Left colon (tissue), 2 donors: ENCODE measurements at regions of chr2 and their contacts with region 1.

Region 1: GRCh38 chr2:147910990-147911473 is 66.2 kb downstream of the ACVR2A start:
- DNase-seq: no peak
- ATAC-seq: peak; percentile 52

Region 2: DNA sequence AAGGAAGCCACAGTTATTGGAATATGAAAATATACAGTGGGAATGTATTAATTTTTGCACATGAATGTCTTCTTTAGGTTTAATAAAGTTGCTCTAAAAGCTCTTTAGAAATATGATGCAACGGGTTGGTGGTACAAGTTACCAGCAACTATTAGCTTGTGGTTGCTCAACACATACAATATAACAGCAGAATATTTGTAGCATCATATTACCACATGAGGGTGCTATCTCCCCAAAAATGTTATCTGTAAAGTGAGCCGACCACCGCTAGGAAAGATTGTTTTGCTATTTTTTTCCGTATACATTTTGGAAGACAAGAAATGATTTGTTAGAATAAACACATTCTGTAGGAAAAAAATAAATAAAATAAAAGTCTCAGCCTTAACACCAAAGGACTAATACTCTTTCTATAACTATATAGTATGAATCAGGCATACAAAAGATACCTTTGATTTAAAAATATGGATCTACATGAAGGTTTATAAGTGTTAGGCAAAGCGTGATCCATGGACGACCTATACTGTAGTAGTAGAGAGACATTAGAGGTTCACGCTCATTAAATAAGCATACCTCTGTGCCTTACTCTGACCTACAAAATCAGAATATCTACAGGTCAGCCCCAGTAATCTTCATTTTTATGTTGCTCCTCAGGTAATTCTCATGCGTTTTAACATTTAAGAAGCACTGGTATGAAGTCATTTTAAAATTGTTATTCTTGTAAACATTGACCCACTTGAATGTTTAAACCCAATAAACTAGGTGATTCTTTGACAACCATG is 1176.8 kb before region 1 on chr2:
- intact Hi-C with region 1: loop called in 1 of 2 experiments (anchors 10 kb)
- DNase-seq: no peak
- ATAC-seq: peak; percentile 55

Region 3: GRCh38 chr2:146927080-146927711 is 983.8 kb before region 1 on chr2:
- intact Hi-C with region 1: loop called in 1 of 2 experiments (anchors 10 kb)
- DNase-seq: peak; percentile 29 to 46
- ATAC-seq: peak; percentile 85

Region 4: GRCh38 chr2:147082850-147083522 is 828.0 kb before region 1 on chr2:
- intact Hi-C with region 1: loop called in 1 of 2 experiments (anchors 10 kb)
- DNase-seq: peak in 1 of 2 donors; percentile 31
- ATAC-seq: peak; percentile 66

Region 5: GRCh38 chr2:147968571-147968970 is 57.5 kb after region 1 on chr2:
- intact Hi-C with region 1: no loop called
- DNase-seq: no peak
- ATAC-seq: no peak